BJ (cell line): ENCODE measurements at regions of chr9 and their contacts with region 1.

Region 1: GRCh38 chr9:133792721-133793470 is 54.7 kb upstream of the SARDH start:
- DNase-seq: peak; percentile 12
- H3K4me3 ChIP-seq: no peak overlapping the region
- H3K27me3 ChIP-seq: no peaks in the 10 kb centered on the region
- CTCF ChIP-seq: peak; percentile 98

Region 2: DNA sequence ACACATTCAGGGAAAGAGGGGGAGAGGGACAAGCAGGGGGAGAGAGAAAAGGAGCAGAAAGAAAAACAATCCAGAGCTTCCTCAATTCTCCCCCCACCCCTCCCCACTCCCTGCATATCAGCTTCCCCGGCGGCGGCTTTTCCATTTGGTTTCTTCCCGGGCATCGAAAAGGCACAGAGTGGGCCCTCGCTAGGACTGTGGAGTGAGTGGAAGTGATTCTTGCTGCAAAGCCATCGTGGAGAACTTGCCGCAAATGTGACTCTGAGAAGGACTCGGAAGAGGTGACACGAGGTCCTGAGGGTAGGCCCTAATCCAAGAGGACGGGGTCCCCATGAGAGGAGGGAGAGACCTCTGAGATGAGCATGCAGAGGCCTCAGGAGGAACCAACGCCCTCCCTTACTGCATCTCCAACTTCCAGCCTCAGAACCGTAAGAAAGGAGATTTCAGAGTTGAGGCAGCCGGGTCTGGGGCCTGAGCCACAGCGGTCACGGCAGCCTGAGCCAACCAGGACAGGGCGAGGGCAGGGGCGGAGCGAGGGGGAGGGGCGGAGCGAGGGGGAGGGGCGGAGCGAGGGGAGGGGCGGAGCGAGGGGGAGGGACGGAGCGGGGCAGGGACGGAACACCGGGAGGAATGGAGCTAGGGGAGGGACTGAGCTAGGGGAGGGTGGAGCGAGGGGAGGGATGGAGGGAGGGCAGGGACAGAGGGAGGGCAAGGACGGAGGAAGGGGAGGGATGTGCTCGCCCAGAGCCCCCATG is 33.6 kb before region 1 on chr9:
- CTCF ChIA-PET with region 1: no interaction called
- POLR2A ChIA-PET with region 1: no interaction called
- DNase-seq: no peak
- H3K4me3 ChIP-seq: no peak overlapping the region
- H3K27me3 ChIP-seq: no peaks in the 10 kb centered on the region
- CTCF ChIP-seq: no peak

Region 3: GRCh38 chr9:133782157-133783130 is 10.5 kb before region 1 on chr9:
- CTCF ChIA-PET with region 1: interaction called, 30 read pairs
- POLR2A ChIA-PET with region 1: no interaction called
- DNase-seq: no peak
- H3K4me3 ChIP-seq: no peak overlapping the region
- H3K27me3 ChIP-seq: no peaks in the 10 kb centered on the region
- CTCF ChIP-seq: peak; percentile 92

Region 4: DNA sequence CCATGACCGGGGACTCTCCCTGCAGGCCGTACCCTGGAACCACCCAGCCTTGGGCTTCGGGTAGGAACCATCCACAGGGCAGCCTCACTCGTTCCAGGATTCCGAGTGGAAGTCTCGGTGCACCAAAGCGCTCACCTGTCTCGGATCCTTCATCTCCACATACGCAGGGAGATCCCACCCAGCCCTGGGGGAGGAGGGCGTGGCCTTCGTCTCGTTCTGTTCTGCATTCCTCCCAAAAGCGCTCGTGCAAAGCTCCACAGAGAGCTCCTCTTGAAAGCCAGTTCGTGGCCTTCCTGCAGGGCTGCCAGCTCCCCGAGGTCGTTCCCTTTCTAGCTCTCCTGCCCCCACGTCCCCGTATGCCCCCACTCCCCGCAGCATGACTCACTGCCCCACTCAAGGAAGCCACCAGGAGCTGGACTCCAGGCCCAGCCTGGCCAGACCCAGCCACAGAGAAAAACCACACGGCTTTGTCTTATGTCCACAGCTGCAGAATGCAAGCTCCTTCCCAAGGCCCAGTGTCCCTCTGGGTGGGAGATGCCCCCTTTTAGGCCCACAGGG is 10.2 kb after region 1 on chr9:
- CTCF ChIA-PET with region 1: interaction called, 11 read pairs
- POLR2A ChIA-PET with region 1: no interaction called
- DNase-seq: no peak
- H3K4me3 ChIP-seq: no peak overlapping the region
- H3K27me3 ChIP-seq: no peaks in the 10 kb centered on the region
- CTCF ChIP-seq: no peak

Region 5: GRCh38 chr9:134135343-134136118 is 342.6 kb after region 1 on chr9 and contains the start of gene WDR5:
- CTCF ChIA-PET with region 1: no interaction called
- POLR2A ChIA-PET with region 1: interaction called, 10 read pairs
- DNase-seq: no peak
- H3K4me3 ChIP-seq: peak within 1 kb of the TSS; percentile 99
- H3K27me3 ChIP-seq: no peaks in the 10 kb centered on the region
- CTCF ChIP-seq: peak; percentile 39; the same call in 1 of the 2 replicates
- polyA plus RNA-seq, gene WDR5: 23.8 and 24.4 TPM in 2 replicates